ENCODE measurements at regions of chr17 and their contacts with region 1.

Region 1: GRCh38 chr17:63406689-63407330 is 39.3 kb downstream of the CYB561 start:
- DNase-seq: peak; percentile 74
- H3K4me3 Mint-ChIP-seq: no peak overlapping the region
- H3K27ac Mint-ChIP-seq: no peak overlapping the region
- H3K4me1 Mint-ChIP-seq: peaks cover 11% of the 10 kb centered on the region
- H3K27me3 Mint-ChIP-seq: no peaks in the 10 kb centered on the region

Region 2: GRCh38 chr17:62671583-62672312 is 735.1 kb before region 1 on chr17:
- CTCF ChIA-PET with region 1: interaction called, 37 read pairs
- POLR2A ChIA-PET with region 1: no interaction called
- intact Hi-C with region 1: loop called (anchors 10 kb)
- DNase-seq: no peak
- H3K4me3 Mint-ChIP-seq: no peak overlapping the region
- H3K27ac Mint-ChIP-seq: no peak overlapping the region
- H3K4me1 Mint-ChIP-seq: no peaks in the 10 kb centered on the region
- H3K27me3 Mint-ChIP-seq: no peaks in the 10 kb centered on the region

Region 3: DNA sequence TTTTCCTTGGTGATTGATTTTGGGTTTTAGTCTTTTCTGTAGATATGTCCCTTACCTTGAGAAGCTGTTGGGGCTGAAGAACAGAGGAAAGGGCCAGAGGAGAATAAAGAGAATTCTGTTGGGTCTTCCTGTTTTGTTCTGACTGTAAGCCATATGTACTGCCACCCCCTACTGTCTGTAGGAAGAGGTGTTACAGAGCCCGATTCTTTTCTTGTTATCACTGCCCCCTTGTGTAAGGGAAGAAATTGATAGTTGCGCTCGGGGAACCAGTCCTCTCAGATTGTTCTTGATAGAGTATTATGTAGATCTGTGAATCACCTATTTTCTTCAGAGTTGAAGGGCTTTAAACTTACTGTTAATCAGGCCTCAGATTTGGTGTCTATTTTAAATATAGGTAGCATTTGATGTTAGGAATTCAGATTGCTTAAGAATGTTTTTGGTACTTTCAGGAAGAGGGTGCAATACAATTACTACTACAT is 438.3 kb before region 1 on chr17:
- CTCF ChIA-PET with region 1: interaction called, 10 read pairs
- POLR2A ChIA-PET with region 1: no interaction called
- intact Hi-C with region 1: loop called (anchors 1 kb)
- DNase-seq: peak; percentile 58
- H3K4me3 Mint-ChIP-seq: no peak overlapping the region
- H3K27ac Mint-ChIP-seq: no peak overlapping the region
- H3K4me1 Mint-ChIP-seq: peaks cover 28% of the 10 kb centered on the region
- H3K27me3 Mint-ChIP-seq: peaks cover 18% of the 10 kb centered on the region

Region 4: DNA sequence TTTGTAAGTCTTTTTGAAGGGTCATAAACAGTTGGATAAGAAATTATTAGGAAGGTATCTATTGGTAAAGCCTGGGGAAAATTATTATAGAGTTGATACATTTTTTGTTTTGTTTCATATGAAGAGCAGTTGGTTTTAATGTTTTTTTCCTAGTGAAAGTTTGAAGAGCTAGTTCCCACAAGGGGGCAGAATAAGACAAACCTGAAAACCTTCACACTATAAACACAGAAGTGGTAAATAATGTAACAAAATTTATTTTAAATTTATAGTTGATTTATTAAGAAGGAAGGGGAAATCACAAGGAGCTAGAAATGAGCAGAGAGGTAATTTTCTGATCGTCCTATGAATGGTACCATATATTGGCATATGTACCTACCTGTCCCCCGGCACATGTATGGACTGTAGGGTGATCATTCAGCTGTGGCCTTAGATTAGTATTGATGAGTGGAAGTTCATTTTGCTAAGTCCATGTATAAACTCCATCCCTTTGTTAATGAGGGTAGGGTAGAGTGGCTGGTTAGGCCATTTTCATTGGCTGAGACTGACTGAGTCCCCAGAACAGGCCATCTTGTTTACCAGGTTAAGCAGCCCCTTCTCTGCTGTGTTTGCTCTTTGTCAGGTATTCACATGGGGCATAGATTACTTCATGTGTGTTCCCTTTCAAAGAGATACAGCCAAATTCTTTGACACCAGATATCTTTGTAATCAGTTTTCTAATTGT is 324.4 kb before region 1 on chr17:
- CTCF ChIA-PET with region 1: interaction called, 45 read pairs
- POLR2A ChIA-PET with region 1: no interaction called
- intact Hi-C with region 1: loop called (anchors 1 kb)
- DNase-seq: no peak
- H3K4me3 Mint-ChIP-seq: no peak overlapping the region
- H3K27ac Mint-ChIP-seq: no peak overlapping the region
- H3K4me1 Mint-ChIP-seq: no peaks in the 10 kb centered on the region
- H3K27me3 Mint-ChIP-seq: no peaks in the 10 kb centered on the region

Region 5: GRCh38 chr17:63381101-63381729 is 25.6 kb before region 1 on chr17:
- CTCF ChIA-PET with region 1: interaction called, 12 read pairs
- POLR2A ChIA-PET with region 1: no interaction called
- intact Hi-C with region 1: no loop called
- DNase-seq: no peak
- H3K4me3 Mint-ChIP-seq: no peak overlapping the region
- H3K27ac Mint-ChIP-seq: no peak overlapping the region
- H3K4me1 Mint-ChIP-seq: no peaks in the 10 kb centered on the region
- H3K27me3 Mint-ChIP-seq: no peaks in the 10 kb centered on the region

Region 6: GRCh38 chr17:63425482-63425881 is 18.7 kb after region 1 on chr17:
- CTCF ChIA-PET with region 1: interaction called, 19 read pairs
- POLR2A ChIA-PET with region 1: no interaction called
- intact Hi-C with region 1: no loop called
- DNase-seq: peak; percentile 79
- H3K4me3 Mint-ChIP-seq: no peak overlapping the region
- H3K27ac Mint-ChIP-seq: no peak overlapping the region
- H3K4me1 Mint-ChIP-seq: peaks cover 33% of the 10 kb centered on the region
- H3K27me3 Mint-ChIP-seq: no peaks in the 10 kb centered on the region

Measured in activated CD4-positive, alpha-beta memory T cell treated with anti-CD3 and anti-CD28 coated beads for 36 hours (primary cell).